ENCODE measurements at regions of chr5 and their contacts with region 1.

Region 1: DNA sequence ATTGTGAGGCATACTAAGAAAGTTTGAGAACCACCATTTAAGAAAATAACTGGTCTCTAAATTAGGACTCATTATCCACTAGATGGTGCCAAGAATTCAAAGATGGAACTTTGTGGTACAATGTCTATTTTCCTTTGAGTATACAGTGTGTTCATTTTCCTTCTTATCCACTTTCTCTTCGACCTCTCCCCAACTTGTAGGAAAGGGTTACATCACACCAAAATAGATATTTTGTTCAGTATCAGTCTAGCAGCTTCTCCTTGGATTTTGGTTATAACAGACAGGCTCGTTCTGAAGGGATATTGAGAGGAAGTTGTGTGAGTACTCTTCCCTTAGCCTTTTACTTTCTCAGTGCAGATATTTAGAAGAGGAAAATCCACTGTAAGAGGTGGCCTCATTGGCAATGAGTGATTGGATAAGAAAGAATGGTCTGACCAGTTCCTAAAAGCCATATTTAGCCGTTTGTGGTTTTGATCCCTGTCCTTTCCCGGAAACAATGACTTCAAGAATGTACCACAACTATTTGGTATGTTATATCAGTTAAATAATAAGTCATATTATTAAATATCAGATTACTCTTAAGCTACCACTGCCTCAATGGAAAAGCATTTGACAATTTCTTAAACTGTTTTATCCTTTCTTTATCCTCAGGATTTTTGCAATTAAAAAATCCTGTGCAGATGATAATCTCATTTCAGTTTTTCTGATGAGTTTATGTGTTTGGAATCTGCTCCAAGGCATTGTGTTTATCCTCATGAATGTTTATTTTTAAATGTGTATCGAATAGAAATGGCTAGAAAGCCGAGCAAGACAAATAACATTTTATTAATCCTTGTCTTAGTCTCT is 69.0 kb upstream of the GRAMD2B start:
- DNase-seq: no peak
- H3K4me3 Mint-ChIP-seq: no peak overlapping the region
- H3K27ac Mint-ChIP-seq: no peak overlapping the region
- H3K4me1 Mint-ChIP-seq: peaks cover 7% of the 10 kb centered on the region
- H3K27me3 Mint-ChIP-seq: peaks cover 5% of the 10 kb centered on the region

Region 2: DNA sequence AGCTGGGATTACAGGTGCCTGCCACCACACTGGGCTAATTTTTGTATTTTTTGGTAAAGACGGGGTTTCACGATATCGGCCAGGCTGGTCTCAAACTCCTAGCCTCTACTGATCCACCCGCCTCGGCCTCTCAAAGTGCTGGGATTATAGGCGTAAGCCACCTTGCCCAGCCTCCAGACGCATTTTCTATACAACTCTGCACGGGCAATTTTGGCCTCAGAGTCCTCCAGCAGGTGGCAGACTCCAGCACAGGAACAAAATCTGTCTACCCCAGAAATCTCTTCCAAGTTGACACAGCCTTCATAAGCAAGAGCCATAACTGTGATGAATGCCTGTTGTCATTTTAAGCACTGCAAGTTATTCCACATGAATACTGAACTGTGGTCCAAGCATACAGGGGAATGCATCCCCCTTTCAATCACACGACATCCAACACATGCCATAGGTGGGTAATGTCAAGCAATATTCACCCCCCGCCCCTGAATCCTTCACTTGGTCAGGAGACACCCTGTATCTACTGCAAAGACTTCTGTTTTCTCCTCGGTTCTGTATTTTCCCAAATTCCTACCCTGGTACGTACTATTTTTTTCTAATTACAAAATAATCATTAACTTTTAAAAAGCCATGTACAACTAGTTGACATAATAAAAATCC is 190.0 kb after region 1 on chr5:
- CTCF ChIA-PET with region 1: interaction called, 20 read pairs
- POLR2A ChIA-PET with region 1: no interaction called
- DNase-seq: peak; percentile 47
- H3K4me3 Mint-ChIP-seq: no peak overlapping the region
- H3K27ac Mint-ChIP-seq: no peak overlapping the region
- H3K4me1 Mint-ChIP-seq: no peaks in the 10 kb centered on the region
- H3K27me3 Mint-ChIP-seq: peaks cover 2% of the 10 kb centered on the region

Region 3: DNA sequence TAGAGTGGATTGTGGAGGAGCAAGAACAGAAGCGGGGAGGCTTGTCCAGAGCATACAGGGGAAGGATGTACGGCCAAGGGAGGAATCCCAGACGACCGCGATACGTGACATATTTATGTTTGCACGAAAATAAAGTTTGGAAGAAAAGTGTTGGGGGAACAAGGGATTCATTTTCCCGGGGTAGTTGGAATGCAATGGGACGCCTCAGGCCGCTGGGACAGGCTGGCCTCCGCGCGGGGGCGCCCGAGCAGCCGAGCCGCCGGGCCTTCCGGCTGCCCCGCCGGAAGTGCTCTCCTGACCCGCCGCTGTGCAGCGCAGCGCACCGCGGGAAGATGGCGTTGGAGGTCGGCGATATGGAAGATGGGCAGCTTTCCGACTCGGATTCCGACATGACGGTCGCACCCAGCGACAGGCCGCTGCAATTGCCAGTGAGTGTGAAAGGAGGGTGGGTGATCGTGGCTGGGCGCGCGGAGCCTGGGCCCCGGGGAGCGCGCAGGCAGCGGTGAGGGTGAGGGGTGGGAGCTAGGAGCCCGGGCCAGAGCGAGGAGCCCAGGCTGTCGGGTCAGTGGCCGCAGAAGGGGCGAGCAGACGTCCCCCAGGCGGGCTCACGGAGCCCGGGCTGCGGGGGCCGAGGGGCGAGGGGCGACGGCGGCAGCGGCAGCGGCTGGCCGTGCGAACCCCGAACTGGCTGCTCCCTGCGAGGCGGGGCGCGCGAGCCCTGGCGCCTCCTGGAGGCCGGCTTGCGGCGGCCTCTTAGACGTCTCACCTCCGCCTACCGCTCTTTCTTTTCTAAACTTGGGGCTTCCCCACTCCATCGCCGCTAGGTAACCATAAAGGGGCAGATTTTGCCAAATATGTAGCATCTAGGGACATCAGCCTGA is 246.6 kb after region 1 on chr5 and contains the start of gene PHAX:
- CTCF ChIA-PET with region 1: interaction called, 14 read pairs
- POLR2A ChIA-PET with region 1: no interaction called
- DNase-seq: peak; percentile 77
- H3K4me3 Mint-ChIP-seq: peak within 1 kb of the TSS; percentile 97
- H3K27ac Mint-ChIP-seq: peak within 1 kb of the TSS; percentile 89
- H3K4me1 Mint-ChIP-seq: peaks cover 34% of the 10 kb centered on the region
- H3K27me3 Mint-ChIP-seq: peaks cover 6% of the 10 kb centered on the region
- total RNA-seq, gene PHAX: 31.5 to 33.8 TPM